Activated T-helper 1 cell treated with anti-CD3 and anti-CD28 coated beads, Interleukin-12 subunit alpha, Interleukin-12 subunit beta, Interleukin-2, Interleukin-4 antibody, amounts not matched to agents 30 ng/mL and 10 ng/mL and 1 ng/mL, durations not matched to agents 14 hours and 24 hours and 36 hours (primary cell): ENCODE measurements at regions of chr4 and their contacts with region 1.

Region 1: GRCh38 chr4:105061136-105061696 is 85.5 kb upstream of the TET2 start:
- DNase-seq: peak; percentile 35
- H3K4me3 Mint-ChIP-seq: peak overlapping the region; percentile 17
- H3K27ac Mint-ChIP-seq: peak overlapping the region; percentile 93
- H3K4me1 Mint-ChIP-seq: peaks cover 55% of the 10 kb centered on the region
- H3K27me3 Mint-ChIP-seq: no peaks in the 10 kb centered on the region

Region 2: DNA sequence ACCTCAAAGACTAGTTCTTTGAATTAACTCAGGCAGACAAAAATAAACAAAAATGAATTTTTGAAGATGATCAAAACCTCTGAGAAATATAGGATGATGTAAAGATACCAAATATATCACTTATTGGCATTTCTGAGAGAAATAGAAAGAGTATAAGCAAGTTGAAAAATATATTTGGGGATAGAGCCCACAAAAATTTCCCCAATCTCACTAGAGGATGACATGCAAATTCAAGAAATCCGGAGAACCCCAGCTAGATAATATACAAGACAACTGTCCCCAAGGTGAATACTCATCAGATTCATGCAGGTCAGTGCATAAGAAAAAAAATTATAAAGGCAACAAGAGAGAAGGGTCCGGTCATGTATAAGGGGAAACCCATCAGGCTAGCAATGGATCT is 695.6 kb before region 1 on chr4:
- intact Hi-C with region 1: no loop called
- DNase-seq: no peak
- H3K4me3 Mint-ChIP-seq: no peak overlapping the region
- H3K27ac Mint-ChIP-seq: no peak overlapping the region
- H3K4me1 Mint-ChIP-seq: no peaks in the 10 kb centered on the region
- H3K27me3 Mint-ChIP-seq: no peaks in the 10 kb centered on the region

Region 3: GRCh38 chr4:104879367-104879766 is 181.8 kb before region 1 on chr4:
- intact Hi-C with region 1: loop called (anchors 1 kb)
- DNase-seq: no peak
- H3K4me3 Mint-ChIP-seq: peak overlapping the region; percentile 56
- H3K27ac Mint-ChIP-seq: no peak overlapping the region
- H3K4me1 Mint-ChIP-seq: peaks cover 8% of the 10 kb centered on the region
- H3K27me3 Mint-ChIP-seq: peaks cover 6% of the 10 kb centered on the region

Region 4: DNA sequence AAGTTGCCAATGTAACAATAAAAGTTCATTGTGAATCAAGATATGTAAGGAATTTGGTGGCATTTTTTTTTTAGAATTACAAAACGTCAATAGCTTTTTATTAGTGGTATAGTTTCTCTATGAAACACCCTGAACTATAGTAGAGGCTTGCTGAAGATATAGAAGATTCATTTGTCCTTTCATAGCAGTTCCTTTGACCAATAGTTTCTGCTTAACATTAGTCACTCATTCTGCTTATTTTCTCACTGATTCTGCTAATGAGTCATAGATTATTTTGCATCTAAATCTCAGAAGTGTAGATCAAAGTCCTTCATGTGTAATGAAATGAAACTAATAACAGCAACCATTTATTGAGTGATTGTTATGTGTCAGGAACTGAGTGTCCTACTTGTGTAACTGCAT is 119.6 kb before region 1 on chr4:
- intact Hi-C with region 1: loop called (anchors 5 kb)
- DNase-seq: no peak
- H3K4me3 Mint-ChIP-seq: no peak overlapping the region
- H3K27ac Mint-ChIP-seq: no peak overlapping the region
- H3K4me1 Mint-ChIP-seq: peaks cover 23% of the 10 kb centered on the region
- H3K27me3 Mint-ChIP-seq: peaks cover 3% of the 10 kb centered on the region

Region 5: DNA sequence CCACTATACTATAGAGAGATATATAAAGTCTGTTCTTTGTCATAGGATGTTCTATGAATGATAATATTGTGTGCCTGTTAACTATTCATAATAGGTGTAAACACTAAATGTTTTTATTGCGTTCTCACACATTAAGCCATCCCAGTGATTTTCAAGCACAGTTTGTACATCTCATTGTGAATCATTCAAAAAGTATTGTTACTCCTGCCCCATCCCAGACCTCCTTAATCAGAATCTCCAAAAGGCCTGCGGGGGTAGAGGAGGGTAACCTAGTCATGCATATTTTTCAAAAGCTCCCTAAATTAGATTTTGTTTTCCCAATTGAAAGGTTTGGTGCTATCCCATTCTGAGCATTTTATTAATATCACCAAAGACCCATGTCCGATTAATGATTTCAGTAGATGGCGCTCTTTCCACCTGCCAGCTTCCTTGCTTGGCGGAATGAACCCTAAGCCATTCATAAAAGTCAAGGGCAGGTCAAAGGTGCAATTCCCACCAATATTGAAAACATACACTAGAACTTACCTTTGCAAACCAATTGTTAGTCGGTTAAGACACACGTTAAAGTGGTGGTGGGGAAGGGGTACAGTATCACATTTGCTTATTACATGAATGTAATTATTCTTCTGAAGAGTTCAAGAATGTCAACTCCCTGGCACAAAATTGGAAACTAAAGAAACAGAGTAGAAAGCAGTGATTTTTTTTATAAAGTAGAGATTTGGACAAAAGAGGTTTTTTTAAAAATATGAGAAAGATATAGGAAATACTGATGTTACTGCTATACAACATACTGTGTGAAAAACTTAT is 79.7 kb after region 1 on chr4:
- intact Hi-C with region 1: loop called (anchors 1 kb)
- DNase-seq: no peak
- H3K4me3 Mint-ChIP-seq: no peak overlapping the region
- H3K27ac Mint-ChIP-seq: no peak overlapping the region
- H3K4me1 Mint-ChIP-seq: peaks cover 21% of the 10 kb centered on the region
- H3K27me3 Mint-ChIP-seq: no peaks in the 10 kb centered on the region

Region 6: GRCh38 chr4:105191621-105192210 is 130.5 kb after region 1 on chr4:
- intact Hi-C with region 1: loop called (anchors 1 kb)
- DNase-seq: no peak
- H3K4me3 Mint-ChIP-seq: peak overlapping the region; percentile 8
- H3K27ac Mint-ChIP-seq: peak overlapping the region; percentile 74
- H3K4me1 Mint-ChIP-seq: peaks cover 53% of the 10 kb centered on the region
- H3K27me3 Mint-ChIP-seq: no peaks in the 10 kb centered on the region

Region 7: DNA sequence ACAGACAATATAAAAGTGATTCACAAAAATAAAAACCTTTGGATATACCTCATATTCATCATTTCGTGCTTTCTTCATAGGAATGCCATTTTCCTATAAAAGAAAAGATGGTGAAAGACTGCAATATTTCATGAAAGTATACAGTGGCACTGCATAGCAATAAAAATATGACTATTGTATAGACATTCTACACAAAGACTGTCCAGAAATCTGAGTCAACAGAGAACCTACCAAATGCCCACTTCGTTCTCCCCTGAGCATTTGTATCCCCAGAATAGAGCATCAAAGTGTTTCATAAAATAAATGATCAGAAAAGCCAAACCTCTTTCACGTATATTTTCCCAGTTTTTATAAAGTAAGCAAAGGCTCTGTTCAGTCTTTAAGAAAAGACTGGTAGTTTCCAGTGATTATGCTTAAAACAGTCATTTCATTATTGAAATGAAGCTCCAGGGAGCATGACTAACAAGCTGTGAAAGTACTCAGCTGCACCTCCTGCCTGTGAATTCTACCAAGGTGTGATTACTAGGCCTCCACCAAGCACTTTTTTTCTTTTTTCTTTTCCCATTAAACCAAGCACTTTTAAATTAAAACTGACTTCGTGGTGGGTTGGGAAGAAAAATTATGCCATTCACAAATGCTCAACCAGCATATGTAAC is 392.5 kb after region 1 on chr4:
- intact Hi-C with region 1: loop called (anchors 5 kb)
- DNase-seq: no peak
- H3K4me3 Mint-ChIP-seq: no peak overlapping the region
- H3K27ac Mint-ChIP-seq: peak overlapping the region; percentile 45
- H3K4me1 Mint-ChIP-seq: peaks cover 33% of the 10 kb centered on the region
- H3K27me3 Mint-ChIP-seq: no peaks in the 10 kb centered on the region

Region 8: GRCh38 chr4:106315968-106316772 is 1255.0 kb after region 1 on chr4 and contains the starts of genes AIMP1 and TBCK:
- intact Hi-C with region 1: loop called (anchors 5 kb)
- DNase-seq: peak; percentile 83
- H3K4me3 Mint-ChIP-seq: no peak within 1 kb of the TSS
- H3K27ac Mint-ChIP-seq: no peak within 1 kb of the TSS
- H3K4me1 Mint-ChIP-seq: peaks cover 30% of the 10 kb centered on the region
- H3K27me3 Mint-ChIP-seq: no peaks in the 10 kb centered on the region
- total RNA-seq, gene AIMP1: 86.4 and 86.9 TPM in 2 replicates
- total RNA-seq, gene TBCK: 24.4 and 25.1 TPM in 2 replicates